ENCODE measurements at regions of chr11 and their contacts with region 1.

Region 1: GRCh38 chr11:47724041-47724729 is 9.0 kb upstream of the AGBL2 start:
- DNase-seq: no peak
- H3K4me3 Mint-ChIP-seq: no peak overlapping the region
- H3K27ac Mint-ChIP-seq: no peak overlapping the region
- H3K4me1 Mint-ChIP-seq: peaks cover 3% of the 10 kb centered on the region
- H3K27me3 Mint-ChIP-seq: no peaks in the 10 kb centered on the region

Region 2: GRCh38 chr11:47642099-47642855 is 81.9 kb before region 1 on chr11 and contains the start of gene MTCH2:
- CTCF ChIA-PET with region 1: interaction called, 3 read pairs
- POLR2A ChIA-PET with region 1: interaction called, 10 read pairs
- DNase-seq: peak; percentile 96
- H3K4me3 Mint-ChIP-seq: peak within 1 kb of the TSS; percentile 100
- H3K27ac Mint-ChIP-seq: peak within 1 kb of the TSS; percentile 97
- H3K4me1 Mint-ChIP-seq: peaks cover 29% of the 10 kb centered on the region
- H3K27me3 Mint-ChIP-seq: no peaks in the 10 kb centered on the region
- total RNA-seq, gene MTCH2: 76.6 to 89.4 TPM